ENCODE measurements at regions of chr2 and their contacts with region 1.

Region 1: DNA sequence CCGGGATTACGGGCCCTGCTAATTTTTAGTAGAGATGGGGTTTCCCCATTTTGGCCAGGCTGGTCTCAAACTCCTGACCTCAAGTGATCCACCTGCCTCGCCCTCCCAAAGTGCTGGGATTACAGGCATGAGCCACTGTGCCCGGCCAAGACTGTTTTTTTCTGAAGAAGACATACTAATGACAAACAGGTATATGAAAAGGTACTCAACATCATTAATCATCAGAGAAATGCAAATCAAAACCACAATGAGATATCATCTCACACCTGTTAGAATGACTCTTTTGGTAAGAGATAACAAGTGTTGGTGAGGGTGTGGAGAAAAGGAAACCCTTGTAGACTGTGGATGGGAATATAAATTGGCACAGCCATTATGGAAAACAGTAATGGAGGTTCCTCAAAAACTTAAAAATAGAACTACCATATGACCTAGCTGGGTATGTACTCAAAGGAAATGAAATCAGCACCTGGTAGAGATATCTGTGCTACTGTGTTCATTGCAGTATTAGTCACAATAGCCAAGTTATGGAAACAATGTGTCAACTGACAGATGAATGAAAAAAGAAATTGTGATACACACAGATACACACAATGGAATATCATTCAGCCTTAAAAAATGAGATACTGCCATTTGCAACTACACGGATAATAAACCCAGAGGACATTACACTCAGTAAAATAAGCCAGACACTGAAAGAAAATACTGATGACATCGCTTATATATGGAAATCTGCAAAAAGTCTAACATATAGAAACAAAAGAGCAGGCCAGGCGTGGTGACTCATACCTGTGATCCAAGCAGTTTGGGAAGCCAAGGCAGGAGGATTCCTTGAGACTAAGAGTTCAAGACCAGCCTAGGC is 20.8 kb downstream of the SOS1 start:
- DNase-seq: peak; percentile 38
- H3K4me3 Mint-ChIP-seq: no peak overlapping the region
- H3K27ac Mint-ChIP-seq: peak overlapping the region; percentile 75
- H3K4me1 Mint-ChIP-seq: peaks cover 47% of the 10 kb centered on the region
- H3K27me3 Mint-ChIP-seq: no peaks in the 10 kb centered on the region

Region 2: GRCh38 chr2:39069136-39069515 is 31.0 kb before region 1 on chr2:
- CTCF ChIA-PET with region 1: no interaction called
- intact Hi-C with region 1: loop called (anchors 5 kb)
- DNase-seq: peak; percentile 22
- H3K4me3 Mint-ChIP-seq: no peak overlapping the region
- H3K27ac Mint-ChIP-seq: no peak overlapping the region
- H3K4me1 Mint-ChIP-seq: peaks cover 15% of the 10 kb centered on the region
- H3K27me3 Mint-ChIP-seq: no peaks in the 10 kb centered on the region

Region 3: GRCh38 chr2:39216346-39217191 is 116.5 kb after region 1 on chr2:
- CTCF ChIA-PET with region 1: interaction called, 4 read pairs
- intact Hi-C with region 1: loop called (anchors 1 kb)
- DNase-seq: peak; percentile 64
- H3K4me3 Mint-ChIP-seq: peak overlapping the region; percentile 57
- H3K27ac Mint-ChIP-seq: peak overlapping the region; percentile 87
- H3K4me1 Mint-ChIP-seq: peaks cover 36% of the 10 kb centered on the region
- H3K27me3 Mint-ChIP-seq: no peaks in the 10 kb centered on the region

Region 4: DNA sequence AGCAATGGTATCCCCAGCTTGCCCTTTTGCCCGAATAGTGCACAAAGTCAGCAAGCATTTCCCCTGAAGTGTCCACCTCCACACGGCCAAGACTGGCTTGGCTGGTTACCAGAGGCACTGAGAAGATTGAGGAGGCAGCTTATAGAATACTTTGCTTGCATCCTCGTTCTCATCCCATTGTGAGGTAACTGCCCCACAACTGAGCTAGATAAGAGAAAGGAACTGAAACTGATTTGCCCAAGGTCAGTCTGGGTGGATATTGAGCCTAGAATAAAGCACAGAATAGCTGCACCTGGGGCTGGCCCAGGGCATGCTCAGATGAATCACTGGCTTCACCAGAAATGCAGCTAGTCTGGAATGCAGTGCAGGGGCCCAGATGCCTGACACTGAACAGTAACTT is 369.7 kb after region 1 on chr2:
- CTCF ChIA-PET with region 1: no interaction called
- intact Hi-C with region 1: loop called (anchors 1 kb)
- DNase-seq: peak; percentile 39
- H3K4me3 Mint-ChIP-seq: no peak overlapping the region
- H3K27ac Mint-ChIP-seq: no peak overlapping the region
- H3K4me1 Mint-ChIP-seq: peaks cover 34% of the 10 kb centered on the region
- H3K27me3 Mint-ChIP-seq: no peaks in the 10 kb centered on the region